ENCODE measurements at regions of chr3 and their contacts with region 1.

Region 1: DNA sequence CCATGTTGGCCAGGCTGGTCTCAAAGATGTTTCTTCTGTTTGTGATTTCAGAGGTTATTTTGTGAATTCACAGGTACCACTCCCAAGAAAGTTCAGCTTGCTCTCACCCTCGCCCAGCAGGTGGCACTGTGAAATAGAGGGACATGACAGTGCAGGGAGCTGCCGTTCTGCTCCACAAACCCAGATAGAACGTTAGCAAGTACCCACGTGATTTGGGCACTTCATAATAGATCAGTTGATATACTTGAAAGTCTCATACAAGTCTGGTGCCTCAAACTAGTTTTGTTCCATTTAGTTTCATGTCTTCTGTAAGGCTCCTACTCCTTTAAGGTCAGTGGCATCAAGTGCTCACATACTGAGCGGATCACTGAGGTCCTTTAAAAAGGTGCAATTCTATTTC is 45.5 kb downstream of the FILIP1L start:
- DNase-seq: peak; percentile 32 to 79 (median 52)
- ATAC-seq: peak; percentile 96
- H3K4me3 ChIP-seq: no peak overlapping the region
- H3K27ac ChIP-seq: no peak overlapping the region
- H3K4me1 ChIP-seq: peaks cover 2 to 8% of the 10 kb centered on the region in 2 experiments; a peak in 3 of 5 replicates
- H3K27me3 ChIP-seq: no peaks in the 10 kb centered on the region
- CTCF ChIP-seq: peak; percentile 69 to 78 (median 70)
- EP300 ChIP-seq: no peak
- POLR2A ChIP-seq: no peak
- RAD21 ChIP-seq: peak; percentile 75 to 84

Region 2: DNA sequence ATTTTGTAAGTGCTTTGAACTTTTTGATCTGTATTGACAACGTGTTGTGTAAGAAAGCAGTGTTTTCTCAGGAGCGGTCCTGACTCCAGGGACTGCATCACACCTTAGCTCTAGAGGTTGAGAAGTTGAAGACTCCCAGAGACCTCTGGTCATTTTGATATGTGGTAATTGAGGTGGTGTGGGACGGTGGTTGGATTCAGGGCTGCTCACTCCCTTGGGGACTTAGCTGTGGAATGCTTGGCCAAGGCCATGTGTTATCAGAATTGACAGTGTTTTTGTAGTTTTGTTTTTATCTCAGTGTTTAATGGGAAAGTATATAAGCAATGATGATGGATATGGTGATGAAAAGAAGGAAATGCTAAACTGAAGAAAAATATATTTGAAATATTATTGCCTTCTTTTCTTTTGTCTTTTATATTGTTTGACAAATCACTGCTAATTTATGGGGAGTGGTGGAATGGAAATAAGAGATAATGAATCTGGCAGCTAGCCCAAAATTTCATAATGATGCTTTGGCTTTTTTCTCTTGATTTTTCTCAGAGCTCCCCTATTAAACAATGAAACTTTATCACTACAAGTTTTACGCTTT is 235.1 kb before region 1 on chr3:
- CTCF ChIA-PET with region 1: no interaction called
- POLR2A ChIA-PET with region 1: no interaction called
- in situ Hi-C with region 1: loop called (anchors 25 kb)
- intact Hi-C with region 1: loop called (anchors 2 kb)
- DNase-seq: no peak
- ATAC-seq: no peak
- H3K4me3 ChIP-seq: no peak overlapping the region
- H3K27ac ChIP-seq: no peak overlapping the region
- H3K4me1 ChIP-seq: no peaks in the 10 kb centered on the region; a peak in 1 of 5 replicates
- H3K27me3 ChIP-seq: no peaks in the 10 kb centered on the region
- CTCF ChIP-seq: no peak
- EP300 ChIP-seq: no peak
- POLR2A ChIP-seq: no peak
- RAD21 ChIP-seq: no peak

Region 3: DNA sequence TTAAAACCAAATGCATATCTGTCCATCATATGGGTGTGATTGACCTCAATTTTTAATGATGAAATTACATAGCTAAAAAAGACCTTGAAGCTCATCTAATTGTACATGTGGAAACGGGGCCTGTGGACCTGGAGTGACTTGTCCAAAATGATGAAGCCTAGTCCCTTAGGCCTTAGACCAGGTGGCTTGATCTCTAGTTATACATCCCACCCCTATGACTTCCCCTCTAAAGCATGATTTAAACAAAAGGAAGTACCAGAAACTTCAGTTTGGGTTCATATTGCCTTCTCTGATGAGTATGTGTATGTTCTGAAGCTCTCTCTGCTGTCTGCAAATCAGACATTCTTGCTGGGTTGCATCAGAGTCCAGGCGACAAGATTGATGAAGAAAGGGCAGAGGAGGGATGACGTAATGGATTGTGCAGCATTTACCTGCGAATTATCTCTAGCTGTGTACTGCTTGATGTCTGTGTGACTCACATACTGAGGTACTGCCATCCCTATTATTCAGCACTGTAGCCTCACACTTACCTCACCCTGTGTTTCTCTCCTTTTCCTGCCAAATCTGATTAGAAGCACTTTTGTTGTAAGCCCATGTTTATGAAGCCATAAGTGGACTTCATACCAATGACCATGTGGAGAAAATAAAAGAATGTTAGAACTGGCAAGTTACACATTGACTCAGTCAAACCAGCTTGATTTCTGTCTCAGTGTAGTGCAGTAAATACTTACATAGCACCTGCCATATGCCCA is 66.1 kb before region 1 on chr3:
- CTCF ChIA-PET with region 1: no interaction called
- POLR2A ChIA-PET with region 1: no interaction called
- in situ Hi-C with region 1: no loop called
- intact Hi-C with region 1: loop called (anchors 10 kb)
- DNase-seq: peak in 2 of 4 experiments; percentile 13 to 40
- ATAC-seq: peak; percentile 87
- H3K4me3 ChIP-seq: no peak overlapping the region
- H3K27ac ChIP-seq: no peak overlapping the region
- H3K4me1 ChIP-seq: peaks cover 0 to 7% of the 10 kb centered on the region in 2 experiments; a peak in 2 of 5 replicates
- H3K27me3 ChIP-seq: no peaks in the 10 kb centered on the region
- CTCF ChIP-seq: no peak
- EP300 ChIP-seq: no peak
- POLR2A ChIP-seq: no peak
- RAD21 ChIP-seq: no peak

Region 4: DNA sequence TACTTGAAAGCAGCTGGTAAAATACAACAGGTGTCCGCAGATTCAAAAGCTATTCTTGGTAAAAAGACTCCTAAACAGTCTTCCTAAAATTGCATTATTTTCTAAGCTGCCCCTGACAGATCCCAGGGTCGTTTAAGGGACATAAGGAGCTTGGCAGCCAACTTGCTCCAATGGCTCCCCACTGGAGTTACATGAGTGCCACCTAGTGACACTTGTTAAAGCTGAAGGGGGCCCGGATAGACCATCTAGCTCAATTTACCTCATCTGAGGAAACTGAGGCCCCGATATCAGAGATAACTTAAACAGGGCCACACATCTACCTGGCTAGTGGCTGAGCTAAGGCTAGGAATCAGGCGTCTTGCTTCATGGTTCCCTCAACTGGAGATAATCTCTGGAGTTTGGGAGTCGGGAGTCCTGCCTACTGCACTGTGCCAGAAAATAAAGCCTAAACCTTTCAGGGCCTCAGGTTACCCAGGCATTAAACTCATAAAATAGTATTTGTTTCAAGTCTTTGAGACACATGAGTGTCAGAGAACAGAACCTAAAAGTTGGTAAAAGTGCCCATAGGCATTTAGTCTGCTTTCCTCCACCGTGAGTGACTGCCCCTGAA is 185.4 kb after region 1 on chr3:
- CTCF ChIA-PET with region 1: interaction called, 4 read pairs
- POLR2A ChIA-PET with region 1: interaction called, 3 read pairs
- in situ Hi-C with region 1: loop called (anchors 10 kb)
- intact Hi-C with region 1: loop called (anchors 1 kb)
- DNase-seq: peak; percentile 14 to 71 (median 42)
- ATAC-seq: peak; percentile 94
- H3K4me3 ChIP-seq: no peak overlapping the region
- H3K27ac ChIP-seq: no peak overlapping the region
- H3K4me1 ChIP-seq: peaks cover 0 to 6% of the 10 kb centered on the region in 2 experiments; a peak in 3 of 5 replicates
- H3K27me3 ChIP-seq: no peaks in the 10 kb centered on the region
- CTCF ChIP-seq: peak; percentile 66 to 79 (median 78)
- EP300 ChIP-seq: no peak
- POLR2A ChIP-seq: no peak
- RAD21 ChIP-seq: peak; percentile 89 to 93